AG04449 (cell line): ENCODE measurements at regions of chr16 and their contacts with region 1.

Region 1: DNA sequence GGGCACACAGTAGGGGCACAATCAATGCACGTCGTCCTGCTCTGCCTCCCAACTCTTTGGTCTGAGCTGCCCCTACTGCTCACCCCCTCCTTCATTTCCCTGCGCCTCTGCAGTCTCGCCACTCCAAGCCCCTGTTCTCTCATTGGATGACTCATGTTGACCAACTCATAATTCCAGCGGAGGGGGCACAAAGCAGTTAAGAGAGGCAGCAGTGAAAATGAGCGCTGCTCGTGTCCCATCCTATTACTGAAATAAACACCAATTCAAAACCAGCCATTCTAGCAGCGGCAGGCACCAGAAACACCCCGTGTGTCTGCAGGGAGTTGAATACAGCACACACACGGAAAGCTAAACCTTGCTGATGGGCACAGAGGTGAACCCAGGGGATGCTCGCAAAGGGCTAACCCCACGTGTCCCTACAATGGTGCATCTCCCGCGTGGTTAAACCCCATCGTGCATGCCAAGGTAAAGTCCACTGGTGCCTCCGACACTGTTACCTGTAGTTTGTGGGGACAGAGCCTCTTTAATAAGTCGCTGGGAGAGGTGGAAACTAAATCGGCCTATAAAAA is 310.4 kb downstream of the XYLT1 start:
- DNase-seq: no peak
- H3K4me3 ChIP-seq: no peak overlapping the region
- CTCF ChIP-seq: no peak

Region 2: GRCh38 chr16:17138801-17139200 is 21.6 kb before region 1 on chr16:
- CTCF ChIA-PET with region 1: no interaction called
- POLR2A ChIA-PET with region 1: no interaction called
- DNase-seq: no peak
- H3K4me3 ChIP-seq: no peak overlapping the region
- CTCF ChIP-seq: no peak

Region 3: DNA sequence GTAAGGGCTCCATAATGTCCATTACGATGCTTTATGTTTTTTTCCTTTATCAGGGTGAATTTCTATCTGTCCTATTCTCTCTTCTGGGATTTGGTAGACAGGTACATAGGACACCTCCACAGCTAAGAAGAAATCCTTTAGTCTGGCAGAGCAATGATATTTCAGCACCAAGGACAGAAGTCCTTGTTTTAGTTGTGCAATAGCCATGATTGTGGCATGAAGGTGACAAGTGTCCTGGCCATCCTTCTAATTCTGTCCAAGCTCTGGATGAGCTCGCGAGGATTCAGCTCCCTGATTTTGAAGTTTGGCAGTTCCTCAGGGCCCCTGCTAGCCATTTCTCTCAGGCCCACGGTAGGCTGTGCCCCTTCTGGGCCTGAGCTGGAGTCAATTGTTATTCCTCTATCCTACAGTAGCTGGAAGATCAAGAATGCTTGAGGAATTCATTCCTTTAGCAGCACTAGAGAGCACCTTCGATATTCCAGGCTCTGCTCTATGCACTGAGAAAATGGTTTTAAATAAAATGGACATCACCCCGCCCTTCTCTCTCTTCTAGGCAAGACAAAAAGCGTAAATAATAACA is 10.4 kb before region 1 on chr16:
- CTCF ChIA-PET with region 1: interaction called, 11 read pairs
- POLR2A ChIA-PET with region 1: no interaction called
- DNase-seq: no peak
- H3K4me3 ChIP-seq: no peak overlapping the region
- CTCF ChIP-seq: no peak